Mammary epithelial cell (primary cell): ENCODE measurements at regions of chr5 and their contacts with region 1.

Region 1: DNA sequence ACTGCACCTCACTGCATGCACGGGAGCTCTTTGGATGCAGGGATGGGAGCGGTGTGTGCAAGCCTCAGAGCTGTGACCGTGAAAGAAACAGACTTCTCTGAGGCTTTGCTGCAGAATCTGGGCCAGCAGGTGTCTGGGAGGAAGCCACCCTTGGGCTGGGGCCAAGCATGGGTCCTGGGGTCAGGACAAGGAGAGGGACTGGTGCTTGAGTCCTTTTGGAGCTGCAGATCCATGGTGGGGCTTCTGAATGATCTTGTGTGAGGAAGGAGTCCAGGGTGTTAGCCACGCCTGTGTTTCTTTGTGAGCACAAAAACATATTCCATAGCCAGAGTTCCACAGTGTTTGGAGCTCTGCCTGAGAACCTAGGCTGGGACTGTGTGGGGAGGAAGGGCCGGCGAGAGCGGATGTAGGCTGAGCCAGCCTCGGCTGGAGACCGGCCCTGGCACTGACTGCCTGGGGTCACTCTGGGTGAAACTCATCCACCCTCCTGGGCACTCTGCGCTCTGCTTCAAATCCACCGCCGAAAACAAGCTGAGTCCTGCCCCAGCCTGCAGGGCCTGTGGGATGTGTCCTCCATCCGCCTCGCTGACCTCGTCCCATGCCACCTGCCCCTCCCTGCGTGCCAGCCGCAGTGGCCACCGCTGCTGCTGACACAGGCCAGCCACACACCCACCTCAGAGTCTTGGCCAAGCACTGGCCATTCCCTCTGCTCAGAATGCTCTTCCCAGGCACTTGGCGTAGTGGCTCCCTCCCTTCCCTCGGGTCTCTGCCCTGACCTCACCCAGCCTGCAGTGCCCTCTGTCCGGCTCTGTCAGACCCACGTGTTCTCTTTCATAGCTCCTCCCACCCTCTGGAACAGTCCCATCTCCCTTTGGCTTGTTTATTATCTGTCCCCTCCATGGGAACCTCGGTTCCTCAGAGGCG is 26.7 kb downstream of the ERGIC1 start:
- DNase-seq: peak; percentile 77
- H3K4me3 ChIP-seq: no peak overlapping the region
- H3K27ac ChIP-seq: peak overlapping the region; percentile 41
- H3K4me1 ChIP-seq: peaks cover 33% of the 10 kb centered on the region
- H3K27me3 ChIP-seq: no peaks in the 10 kb centered on the region
- CTCF ChIP-seq: no peak

Region 2: DNA sequence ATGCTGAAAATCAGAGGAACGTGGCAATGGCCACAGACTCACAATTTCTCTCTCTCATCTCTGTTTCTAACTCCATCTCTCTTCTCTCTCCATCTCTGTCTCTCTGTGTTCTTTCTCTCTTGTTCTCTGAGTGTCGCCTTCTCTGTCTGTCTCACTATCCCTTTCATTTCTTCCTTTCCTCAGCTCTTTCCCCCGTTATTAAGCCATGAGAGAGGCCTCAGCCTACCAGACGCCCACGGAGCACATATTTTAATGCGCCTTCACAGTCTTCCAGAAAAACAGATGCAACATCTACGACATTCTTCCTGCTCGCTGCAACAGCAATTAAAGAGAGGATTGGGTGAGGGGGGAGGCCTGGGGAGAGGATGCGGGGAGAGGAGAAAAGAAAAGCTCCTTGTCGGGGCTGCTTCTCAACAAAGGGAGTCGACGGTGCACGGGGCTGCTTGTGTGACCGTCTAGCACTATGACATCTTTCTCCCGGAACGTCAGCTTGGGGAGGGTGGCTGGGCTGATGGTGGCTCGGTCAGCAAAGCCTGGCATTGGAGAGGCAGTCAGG is 257.5 kb before region 1 on chr5:
- CTCF ChIA-PET with region 1: no interaction called
- dilution Hi-C with region 1: no loop called
- in situ Hi-C with region 1: no loop called
- intact Hi-C with region 1: no loop called
- DNase-seq: no peak
- H3K4me3 ChIP-seq: no peak overlapping the region
- H3K27ac ChIP-seq: no peak overlapping the region
- H3K4me1 ChIP-seq: no peaks in the 10 kb centered on the region
- H3K27me3 ChIP-seq: no peaks in the 10 kb centered on the region
- CTCF ChIP-seq: no peak

Region 3: DNA sequence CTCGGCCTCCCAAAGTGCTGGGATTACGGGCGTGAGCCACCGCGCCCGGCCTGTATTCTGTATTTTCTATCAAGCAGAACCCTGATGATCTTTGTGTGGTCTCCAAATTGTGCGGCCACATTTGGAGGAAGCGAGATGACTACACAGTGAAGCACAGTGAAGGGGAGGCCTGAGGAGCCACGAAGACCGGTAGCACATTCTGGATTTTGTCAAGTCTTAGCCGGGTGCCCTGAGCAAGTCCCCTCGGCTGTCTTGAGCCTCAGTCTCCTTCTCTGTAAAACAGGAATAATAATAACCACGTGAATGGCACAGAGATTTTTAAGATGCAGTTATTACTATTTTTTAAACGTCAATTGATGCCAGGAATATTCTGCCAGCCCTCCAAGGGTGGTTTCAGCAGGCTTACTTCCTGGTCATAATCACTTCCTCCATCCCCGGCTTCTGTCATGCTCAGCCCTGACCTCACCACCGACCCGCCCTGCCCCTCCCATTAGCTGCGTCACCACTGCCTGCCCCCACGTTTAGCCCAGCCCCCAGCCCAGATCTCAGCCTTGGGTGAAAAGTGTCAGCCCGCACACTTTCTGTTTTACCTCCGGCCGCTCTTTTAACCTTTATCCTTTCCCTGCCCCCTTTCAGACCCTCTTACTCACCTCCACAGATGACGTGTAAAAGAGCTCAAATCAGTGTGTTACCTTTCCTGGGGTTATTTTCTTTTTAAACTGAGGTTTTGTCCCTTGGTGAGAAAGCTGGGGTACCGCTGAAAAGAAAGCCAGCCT is 53.7 kb before region 1 on chr5:
- CTCF ChIA-PET with region 1: no interaction called
- dilution Hi-C with region 1: loop called (anchors 5 kb)
- in situ Hi-C with region 1: no loop called
- intact Hi-C with region 1: no loop called
- DNase-seq: peak; percentile 40
- H3K4me3 ChIP-seq: no peak overlapping the region
- H3K27ac ChIP-seq: no peak overlapping the region
- H3K4me1 ChIP-seq: peaks cover 6% of the 10 kb centered on the region
- H3K27me3 ChIP-seq: no peaks in the 10 kb centered on the region
- CTCF ChIP-seq: no peak

Region 4: GRCh38 chr5:172897481-172898217 is 36.9 kb after region 1 on chr5:
- CTCF ChIA-PET with region 1: no interaction called
- dilution Hi-C with region 1: loop called (anchors 5 kb)
- in situ Hi-C with region 1: no loop called
- intact Hi-C with region 1: no loop called
- DNase-seq: no peak
- H3K4me3 ChIP-seq: no peak overlapping the region
- H3K27ac ChIP-seq: no peak overlapping the region
- H3K4me1 ChIP-seq: peaks cover 3% of the 10 kb centered on the region
- H3K27me3 ChIP-seq: no peaks in the 10 kb centered on the region
- CTCF ChIP-seq: no peak